K562 (cell line): ENCODE measurements at regions of chr19 and their contacts with region 1.

Region 1: DNA sequence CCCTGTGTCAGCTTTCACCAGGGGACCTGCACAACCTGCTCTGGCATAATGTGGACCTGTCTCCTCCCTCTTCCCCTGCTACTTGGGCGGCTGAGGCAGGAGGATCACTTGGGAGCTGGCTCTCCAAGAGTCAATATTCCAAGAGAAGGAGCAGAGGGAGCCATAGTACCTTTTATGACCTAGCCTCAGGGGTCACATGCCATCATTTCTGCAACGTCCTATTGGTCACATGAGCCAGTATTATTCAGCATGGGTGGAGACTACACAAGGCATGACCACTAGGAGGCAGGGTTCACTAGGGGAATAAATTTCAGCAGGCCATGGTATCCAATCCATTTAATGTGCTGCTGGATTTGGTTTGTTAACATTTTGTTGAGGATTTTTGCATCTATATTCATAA is 12.0 kb upstream of the SHFL start:
- DNase-seq: peak; percentile 75 to 80 (median 79)
- ATAC-seq: peak; percentile 95
- H3K4me3 ChIP-seq: no peak overlapping the region
- H3K27ac ChIP-seq: no peak overlapping the region
- H3K4me1 ChIP-seq: peaks cover 0 to 9% of the 10 kb centered on the region in 2 experiments; a peak in 2 of 5 replicates
- H3K27me3 ChIP-seq: peaks cover 12 to 33% of the 10 kb centered on the region in 2 experiments
- CTCF ChIP-seq: peak; percentile 68 to 86 (median 79)
- EP300 ChIP-seq: no peak
- POLR2A ChIP-seq: no peak
- RAD21 ChIP-seq: peak; percentile 30 to 81

Region 2: GRCh38 chr19:9934132-9934950 is 139.8 kb before region 1 on chr19:
- CTCF ChIA-PET with region 1: no interaction called
- POLR2A ChIA-PET with region 1: no interaction called
- in situ Hi-C with region 1: no loop called
- intact Hi-C with region 1: no loop called
- DNase-seq: peak; percentile 86 to 94 (median 86)
- ATAC-seq: peak; percentile 93
- H3K4me3 ChIP-seq: no peak overlapping the region
- H3K27ac ChIP-seq: no peak overlapping the region
- H3K4me1 ChIP-seq: peaks cover 3 to 17% of the 10 kb centered on the region in 2 experiments; a peak in 3 of 5 replicates
- H3K27me3 ChIP-seq: peaks cover 0 to 6% of the 10 kb centered on the region in 2 experiments; a peak in 1 of 5 replicates
- CTCF ChIP-seq: peak; percentile 93 to 98 (median 93)
- EP300 ChIP-seq: no peak
- POLR2A ChIP-seq: no peak
- RAD21 ChIP-seq: peak; percentile 94 to 95

Region 3: GRCh38 chr19:10018263-10018662 is 55.9 kb before region 1 on chr19:
- CTCF ChIA-PET with region 1: no interaction called
- POLR2A ChIA-PET with region 1: no interaction called
- in situ Hi-C with region 1: no loop called
- intact Hi-C with region 1: no loop called
- DNase-seq: no peak
- ATAC-seq: no peak
- H3K4me3 ChIP-seq: no peak overlapping the region
- H3K27ac ChIP-seq: no peak overlapping the region
- H3K4me1 ChIP-seq: peaks cover 0 to 4% of the 10 kb centered on the region in 2 experiments; a peak in 1 of 5 replicates
- H3K27me3 ChIP-seq: peaks cover 11 to 44% of the 10 kb centered on the region in 2 experiments; a peak in 4 of 5 replicates
- CTCF ChIP-seq: no peak
- EP300 ChIP-seq: no peak
- POLR2A ChIP-seq: no peak
- RAD21 ChIP-seq: no peak

Region 4: GRCh38 chr19:10112895-10113591 is 38.9 kb after region 1 on chr19:
- CTCF ChIA-PET with region 1: no interaction called
- POLR2A ChIA-PET with region 1: interaction called, 5 read pairs
- in situ Hi-C with region 1: no loop called
- intact Hi-C with region 1: loop called (anchors 1 kb)
- DNase-seq: peak; percentile 56 to 82 (median 60)
- ATAC-seq: peak; percentile 83
- H3K4me3 ChIP-seq: no peak overlapping the region
- H3K27ac ChIP-seq: no peak overlapping the region
- H3K4me1 ChIP-seq: peaks cover 0 to 84% of the 10 kb centered on the region in 2 experiments; a peak in 3 of 5 replicates
- H3K27me3 ChIP-seq: no peaks in the 10 kb centered on the region
- CTCF ChIP-seq: peak; percentile 73 to 82 (median 77)
- EP300 ChIP-seq: no peak
- POLR2A ChIP-seq: peak; percentile 73
- RAD21 ChIP-seq: peak; percentile 58 to 60

Region 5: DNA sequence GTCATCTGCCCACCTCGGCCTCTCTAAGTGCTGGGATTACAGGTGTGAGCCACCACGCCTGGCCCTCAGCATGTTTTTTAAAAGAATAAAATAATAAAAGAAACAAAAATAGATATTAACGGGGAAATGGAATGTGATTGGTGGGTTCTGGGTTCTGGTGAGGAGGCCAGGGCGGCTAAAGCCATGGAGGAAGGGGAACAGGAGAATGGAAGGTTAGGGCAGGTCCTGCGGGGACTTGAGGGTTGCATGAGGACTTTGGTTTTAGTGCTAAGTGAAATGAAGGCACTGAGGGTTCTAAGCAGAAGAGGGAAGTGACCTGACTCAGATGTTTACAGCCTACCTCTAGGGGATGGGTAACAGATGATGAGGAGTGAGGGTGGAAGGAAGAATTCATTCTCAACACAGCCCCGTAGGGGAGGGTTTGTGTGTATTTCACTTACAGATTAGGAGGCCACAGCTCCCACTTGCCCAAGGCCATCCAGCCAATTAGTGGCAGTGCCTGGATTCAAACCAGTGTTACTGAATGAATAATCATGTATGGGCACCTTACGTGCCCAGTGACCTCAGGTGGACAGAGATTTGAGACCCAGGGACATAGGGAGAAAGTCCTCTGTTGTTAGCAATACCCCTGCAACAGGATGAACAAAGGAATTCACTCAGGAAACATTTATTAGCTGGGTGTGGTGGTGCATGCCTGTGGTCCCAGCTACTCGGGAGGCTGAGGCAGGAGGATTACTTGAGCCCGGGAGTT is 171.2 kb after region 1 on chr19:
- CTCF ChIA-PET with region 1: interaction called, 6 read pairs
- POLR2A ChIA-PET with region 1: no interaction called
- in situ Hi-C with region 1: loop called (anchors 5 kb)
- intact Hi-C with region 1: loop called (anchors 1 kb)
- DNase-seq: peak in 1 of 4 experiments; percentile 5
- ATAC-seq: no peak
- H3K4me3 ChIP-seq: no peak overlapping the region
- H3K27ac ChIP-seq: no peak overlapping the region
- H3K4me1 ChIP-seq: peaks cover 1 to 3% of the 10 kb centered on the region in 2 experiments; a peak in 4 of 5 replicates
- H3K27me3 ChIP-seq: no peaks in the 10 kb centered on the region
- CTCF ChIP-seq: no peak
- EP300 ChIP-seq: no peak
- POLR2A ChIP-seq: no peak
- RAD21 ChIP-seq: no peak

Region 6: DNA sequence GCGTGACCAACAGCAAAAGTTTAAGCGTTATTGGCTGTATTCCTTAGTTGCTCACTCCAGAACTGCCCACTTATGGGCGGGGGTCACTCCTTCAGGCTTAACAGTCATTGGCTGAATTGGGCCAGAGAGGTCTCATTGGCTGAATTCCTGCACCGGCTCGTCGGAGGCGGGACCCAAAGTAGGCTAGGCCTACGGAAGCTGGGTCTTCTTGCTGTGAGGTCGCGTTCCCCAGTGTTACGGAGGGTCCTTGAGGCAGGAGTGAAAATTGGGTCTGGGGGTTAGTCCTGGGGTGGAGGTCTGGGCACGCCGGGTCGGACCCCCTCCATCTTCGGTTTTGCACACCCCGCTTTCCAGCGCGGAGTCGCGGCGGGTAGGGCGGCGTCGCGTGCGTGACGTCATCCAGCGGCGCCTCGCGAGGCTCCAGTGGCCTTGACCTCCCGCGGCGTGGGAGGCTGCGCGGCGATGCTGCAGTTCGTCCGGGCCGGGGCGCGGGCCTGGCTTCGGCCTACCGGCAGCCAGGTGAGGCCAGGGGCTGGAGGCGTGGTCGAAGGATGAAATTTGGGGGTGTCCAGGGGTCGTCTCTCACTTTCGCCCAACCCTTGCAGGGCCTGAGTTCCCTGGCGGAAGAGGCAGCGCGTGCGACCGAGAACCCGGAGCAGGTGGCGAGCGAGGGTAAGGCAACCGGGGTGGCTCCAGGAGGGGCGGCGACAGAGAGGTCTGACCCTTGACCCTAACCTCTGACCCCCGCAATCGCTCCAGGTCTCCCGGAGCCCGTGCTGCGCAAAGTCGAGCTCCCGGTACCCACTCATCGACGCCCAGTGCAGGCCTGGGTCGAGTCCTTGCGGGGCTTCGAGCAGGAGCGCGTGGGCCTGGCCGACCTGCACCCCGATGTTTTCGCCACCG is 177.9 kb after region 1 on chr19 and contains the start of gene MRPL4:
- CTCF ChIA-PET with region 1: interaction called, 6 read pairs
- POLR2A ChIA-PET with region 1: no interaction called
- in situ Hi-C with region 1: no loop called
- intact Hi-C with region 1: loop called (anchors 1 kb)
- DNase-seq: peak; percentile 96 to 99 (median 97)
- ATAC-seq: peak; percentile 98
- H3K4me3 ChIP-seq: peak within 1 kb of the TSS; percentile 76
- H3K27ac ChIP-seq: peak within 1 kb of the TSS; percentile 90
- H3K4me1 ChIP-seq: peaks cover 4 to 39% of the 10 kb centered on the region in 2 experiments; a peak in 4 of 5 replicates
- H3K27me3 ChIP-seq: no peaks in the 10 kb centered on the region
- CTCF ChIP-seq: 0 out of 6 replicates have a peak, but pooled peaks of 1 of the 3 experiments have one; percentile 2
- EP300 ChIP-seq: 0 out of 2 replicates have a peak, but pooled peaks have one; percentile 39
- POLR2A ChIP-seq: peak; percentile 90
- RAD21 ChIP-seq: no peak
- polyA plus RNA-seq, gene MRPL4: 1.4 to 5.0 TPM

Region 7: GRCh38 chr19:10416380-10417257 is 342.5 kb after region 1 on chr19:
- CTCF ChIA-PET with region 1: no interaction called
- POLR2A ChIA-PET with region 1: no interaction called
- in situ Hi-C with region 1: no loop called
- intact Hi-C with region 1: no loop called
- DNase-seq: peak; percentile 89 to 97 (median 92)
- ATAC-seq: peak; percentile 61
- H3K4me3 ChIP-seq: peak overlapping the region; percentile 58
- H3K27ac ChIP-seq: peak overlapping the region; percentile 95
- H3K4me1 ChIP-seq: peaks cover 32 to 62% of the 10 kb centered on the region in 2 experiments
- H3K27me3 ChIP-seq: no peaks in the 10 kb centered on the region
- CTCF ChIP-seq: peak; percentile 80 to 99 (median 89)
- EP300 ChIP-seq: peak; percentile 40; the same call in 1 of the 2 replicates
- POLR2A ChIP-seq: peak; percentile 67; the same call in 1 of the 2 replicates
- RAD21 ChIP-seq: peak; percentile 12 to 47; a peak in 3 of 4 replicates